ENCODE measurements at regions of chr1 and their contacts with region 1.

Region 1: GRCh38 chr1:226062558-226063223 is at the start of gene H3-3A:
- DNase-seq: peak; percentile 81 to 96
- ATAC-seq: peak; percentile 65 to 88
- H3K4me3 ChIP-seq: peak within 1 kb of the TSS; percentile 76
- H3K27ac ChIP-seq: peak within 1 kb of the TSS; percentile 98
- H3K4me1 ChIP-seq: peaks cover 26% of the 10 kb centered on the region
- CTCF ChIP-seq: no peak
- EP300 ChIP-seq: no peak
- POLR2A ChIP-seq: peak; percentile 96
- RAD21 ChIP-seq: no peak
- polyA plus RNA-seq, gene H3-3A: 366 and 457 TPM in 2 replicates

Region 2: GRCh38 chr1:225848030-225848955 is 214.4 kb before region 1 on chr1:
- CTCF ChIA-PET with region 1: no interaction called
- POLR2A ChIA-PET with region 1: no interaction called
- DNase-seq: no peak
- ATAC-seq: no peak
- H3K4me3 ChIP-seq: no peak overlapping the region
- H3K27ac ChIP-seq: no peak overlapping the region
- H3K4me1 ChIP-seq: peaks cover 6% of the 10 kb centered on the region; the same call in 1 of the 3 replicates
- CTCF ChIP-seq: no peak
- EP300 ChIP-seq: no peak
- POLR2A ChIP-seq: no peak
- RAD21 ChIP-seq: no peak

Region 3: DNA sequence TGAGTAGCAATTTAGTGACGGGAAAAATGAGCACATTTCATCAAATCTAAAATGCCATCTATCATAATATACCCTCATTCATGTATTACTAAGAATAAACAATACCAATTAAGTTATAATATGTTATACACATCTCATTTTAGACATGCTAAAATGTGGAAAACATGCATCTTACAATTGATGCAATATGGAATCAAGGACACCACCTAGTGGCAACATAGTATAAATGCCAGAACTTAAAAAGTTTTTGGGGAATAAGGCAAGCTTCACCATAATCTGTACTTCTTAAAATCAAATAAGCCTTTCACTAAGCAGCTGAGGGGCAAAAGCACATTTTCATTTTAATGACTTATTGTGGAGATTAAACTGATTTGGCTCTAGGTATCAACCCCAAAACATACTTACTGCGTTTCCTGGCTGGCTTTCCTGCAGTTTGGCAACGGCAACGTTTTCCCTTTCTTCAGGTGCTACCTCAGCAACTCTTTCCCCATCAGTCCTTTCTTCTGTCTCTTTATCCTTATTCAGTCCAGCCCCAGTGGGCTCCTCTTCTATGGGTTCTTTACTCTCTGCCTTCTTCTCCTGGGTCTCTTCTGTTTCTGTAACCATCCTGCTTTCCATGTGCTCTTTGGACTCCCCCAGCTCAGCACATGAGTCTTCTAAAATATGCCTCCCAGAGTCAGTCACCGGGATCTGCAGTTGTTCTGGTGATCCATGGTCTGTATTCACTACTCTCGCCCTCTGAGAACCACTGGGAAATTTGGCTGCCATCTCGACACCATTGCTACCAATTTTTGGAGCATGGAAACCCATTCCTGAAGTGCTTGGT is 75.0 kb before region 1 on chr1:
- CTCF ChIA-PET with region 1: interaction called, 12 read pairs
- POLR2A ChIA-PET with region 1: interaction called, 20 read pairs
- DNase-seq: peak; percentile 42 to 58
- ATAC-seq: peak; percentile 56 to 72; a peak in 4 of 6 replicates
- H3K4me3 ChIP-seq: no peak overlapping the region
- H3K27ac ChIP-seq: no peak overlapping the region
- H3K4me1 ChIP-seq: no peaks in the 10 kb centered on the region
- CTCF ChIP-seq: peak; percentile 77
- EP300 ChIP-seq: no peak
- POLR2A ChIP-seq: no peak
- RAD21 ChIP-seq: peak; percentile 46 to 50; a peak in 4 of 5 replicates

Region 4: GRCh38 chr1:226029093-226029496 is 33.6 kb before region 1 on chr1:
- CTCF ChIA-PET with region 1: interaction called, 9 read pairs
- POLR2A ChIA-PET with region 1: interaction called, 12 read pairs
- DNase-seq: no peak
- ATAC-seq: no peak
- H3K4me3 ChIP-seq: no peak overlapping the region
- H3K27ac ChIP-seq: no peak overlapping the region
- H3K4me1 ChIP-seq: no peaks in the 10 kb centered on the region
- CTCF ChIP-seq: no peak
- EP300 ChIP-seq: no peak
- POLR2A ChIP-seq: no peak
- RAD21 ChIP-seq: no peak

Region 5: GRCh38 chr1:226051356-226051755 is 11.3 kb before region 1 on chr1:
- CTCF ChIA-PET with region 1: interaction called, 8 read pairs
- POLR2A ChIA-PET with region 1: interaction called, 25 read pairs
- DNase-seq: no peak
- ATAC-seq: no peak
- H3K4me3 ChIP-seq: no peak overlapping the region
- H3K27ac ChIP-seq: no peak overlapping the region
- H3K4me1 ChIP-seq: peaks cover 19% of the 10 kb centered on the region
- CTCF ChIP-seq: no peak
- EP300 ChIP-seq: no peak
- POLR2A ChIP-seq: no peak
- RAD21 ChIP-seq: no peak

Region 6: DNA sequence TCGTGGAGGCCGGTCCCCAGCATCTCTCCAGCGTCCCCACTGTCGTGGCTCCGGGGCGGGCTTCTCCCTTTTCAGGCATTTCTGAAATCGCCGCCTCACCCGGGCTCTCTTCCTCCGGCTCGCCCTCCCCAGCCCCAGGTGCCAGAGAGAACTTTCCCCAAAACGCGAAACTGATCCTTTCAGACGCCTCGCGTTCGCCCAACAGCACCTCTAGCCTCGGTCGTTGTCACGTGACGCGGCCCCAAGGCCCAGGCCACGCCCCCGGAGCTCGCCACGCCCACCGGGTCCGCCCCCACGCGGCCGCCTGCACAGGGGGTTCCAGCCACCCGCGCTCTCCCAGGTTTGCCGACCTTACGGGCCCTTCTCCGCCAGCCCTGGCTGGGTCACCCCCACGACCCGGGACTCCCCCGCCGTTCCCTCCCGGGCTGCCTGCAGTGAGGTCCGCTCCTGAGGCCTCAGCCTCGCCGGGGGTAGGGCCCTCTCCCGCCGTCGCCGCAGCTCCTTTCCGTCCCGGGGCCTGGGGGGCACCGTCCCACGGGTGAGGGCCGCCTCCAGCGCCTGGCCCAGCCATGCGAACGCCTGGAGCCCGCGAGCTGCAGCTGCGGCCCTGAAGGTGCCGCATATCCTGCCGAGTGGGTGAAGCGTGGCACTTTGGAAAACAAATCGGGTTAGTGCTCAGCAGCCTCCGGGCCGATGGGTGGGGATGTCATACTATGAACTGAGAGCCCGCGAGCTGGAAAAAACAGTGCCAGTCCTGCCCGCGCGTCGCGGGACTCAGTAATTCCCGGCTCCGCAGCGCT is 20.8 kb after region 1 on chr1:
- CTCF ChIA-PET with region 1: interaction called, 75 read pairs
- POLR2A ChIA-PET with region 1: interaction called, 51 read pairs
- DNase-seq: peak; percentile 87 to 96
- ATAC-seq: peak; percentile 84 to 92
- H3K4me3 ChIP-seq: peak overlapping the region; percentile 68
- H3K27ac ChIP-seq: peak overlapping the region; percentile 85 to 94
- H3K4me1 ChIP-seq: peaks cover 4% of the 10 kb centered on the region; the same call in 2 of the 3 replicates
- CTCF ChIP-seq: no peak
- EP300 ChIP-seq: no peak; a peak in 1 of 5 replicates
- POLR2A ChIP-seq: peak; percentile 59; the same call in 1 of the 2 replicates
- RAD21 ChIP-seq: no peak

Region 7: GRCh38 chr1:226100436-226101391 is 38.0 kb after region 1 on chr1:
- CTCF ChIA-PET with region 1: interaction called, 20 read pairs
- POLR2A ChIA-PET with region 1: interaction called, 6 read pairs
- DNase-seq: peak; percentile 47 to 91
- ATAC-seq: peak; percentile 42 to 71; a peak in 3 of 6 replicates
- H3K4me3 ChIP-seq: peak overlapping the region; percentile 44
- H3K27ac ChIP-seq: 0 out of 6 replicates have a peak overlapping the region, but pooled peaks of 1 of the 2 experiments have one; percentile 17
- H3K4me1 ChIP-seq: no peaks in the 10 kb centered on the region
- CTCF ChIP-seq: no peak
- EP300 ChIP-seq: no peak
- POLR2A ChIP-seq: no peak
- RAD21 ChIP-seq: no peak

Measured in A549 (cell line).